ENCODE measurements at regions of chr1 and their contacts with region 1.

Region 1: DNA sequence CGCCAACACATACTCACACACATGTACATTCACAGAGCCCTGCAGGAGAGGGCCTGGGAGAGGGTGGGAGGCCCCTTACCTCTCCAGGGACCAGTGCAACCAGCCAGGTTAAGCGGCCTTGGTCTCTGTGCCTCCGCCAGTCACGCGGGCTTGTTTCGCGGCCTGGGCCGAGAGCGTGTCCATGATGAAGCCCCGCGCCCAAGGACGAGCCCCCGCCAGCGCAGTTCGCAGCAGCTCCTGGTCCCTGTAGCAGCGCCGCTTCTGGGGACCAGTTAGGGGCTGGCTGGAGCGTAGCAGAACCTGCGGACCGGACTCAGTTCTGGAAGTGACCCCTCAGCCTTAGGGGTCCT is 7.3 kb upstream of the FAM167B start:
- DNase-seq: no peak
- ATAC-seq: no peak
- H3K4me3 ChIP-seq: peak overlapping the region; percentile 49 to 57 (median 54)
- H3K27ac ChIP-seq: peak overlapping the region in 1 of 3 donors; percentile 68
- H3K4me1 ChIP-seq: peaks cover 0 to 13% (median 6%) of the 10 kb centered on the region in 4 donors
- H3K27me3 ChIP-seq: no peaks in the 10 kb centered on the region
- CTCF ChIP-seq: no peak
- POLR2A ChIP-seq: no peak

Region 2: DNA sequence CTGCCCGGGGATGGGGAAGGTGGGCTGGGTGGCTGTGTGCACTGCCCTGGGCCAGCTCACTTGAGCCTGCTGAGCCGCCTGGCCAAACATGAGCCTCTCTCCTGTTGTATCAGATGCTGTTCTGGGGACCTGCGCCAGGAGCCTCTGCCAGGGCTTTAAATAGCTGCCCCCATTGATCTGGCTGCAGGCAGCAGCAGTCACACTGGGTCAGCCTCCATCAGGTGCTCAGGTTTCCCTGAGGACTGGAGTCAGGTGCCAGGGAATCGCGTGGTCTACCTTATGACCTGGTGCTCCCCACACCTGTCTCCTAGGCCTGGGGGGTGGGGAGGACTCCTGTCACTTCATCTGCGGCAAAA is 40.1 kb before region 1 on chr1:
- intact Hi-C with region 1: no loop called
- DNase-seq: peak; percentile 70 to 85 (median 85)
- ATAC-seq: peak; percentile 60 to 82 (median 78)
- H3K4me3 ChIP-seq: no peak overlapping the region
- H3K27ac ChIP-seq: no peak overlapping the region
- H3K4me1 ChIP-seq: peaks cover 0 to 17% (median 7%) of the 10 kb centered on the region in 4 donors
- H3K27me3 ChIP-seq: no peaks in the 10 kb centered on the region
- CTCF ChIP-seq: no peak
- POLR2A ChIP-seq: no peak

Region 3: DNA sequence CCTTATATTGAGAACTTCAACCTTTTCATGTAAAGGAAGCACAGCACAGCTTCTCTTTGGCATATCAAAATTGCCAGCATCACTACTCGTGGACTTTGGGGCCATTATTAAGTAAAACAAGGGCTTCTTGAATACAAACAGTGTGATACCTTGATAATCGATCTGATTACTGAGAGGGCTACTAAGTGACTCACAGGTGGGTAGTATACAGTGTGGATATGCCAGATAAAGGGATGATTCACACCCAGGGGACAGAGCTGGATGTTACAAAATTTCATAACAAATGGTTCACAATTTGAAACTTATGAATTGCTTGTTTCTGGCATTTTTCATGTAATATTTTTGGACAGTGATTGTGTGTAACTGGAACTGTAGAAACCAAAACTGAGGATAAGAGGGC is 67.6 kb after region 1 on chr1:
- intact Hi-C with region 1: loop called in 1 of 2 experiments (anchors 10 kb)
- DNase-seq: no peak
- ATAC-seq: peak in 1 of 4 donors; percentile 78
- H3K4me3 ChIP-seq: no peak overlapping the region
- H3K27ac ChIP-seq: no peak overlapping the region
- H3K4me1 ChIP-seq: peaks cover 0 to 43% (median 18%) of the 10 kb centered on the region in 4 donors
- H3K27me3 ChIP-seq: no peaks in the 10 kb centered on the region
- CTCF ChIP-seq: no peak
- POLR2A ChIP-seq: no peak